A673 (cell line): ENCODE measurements at regions of chr2 and their contacts with region 1.

Region 1: DNA sequence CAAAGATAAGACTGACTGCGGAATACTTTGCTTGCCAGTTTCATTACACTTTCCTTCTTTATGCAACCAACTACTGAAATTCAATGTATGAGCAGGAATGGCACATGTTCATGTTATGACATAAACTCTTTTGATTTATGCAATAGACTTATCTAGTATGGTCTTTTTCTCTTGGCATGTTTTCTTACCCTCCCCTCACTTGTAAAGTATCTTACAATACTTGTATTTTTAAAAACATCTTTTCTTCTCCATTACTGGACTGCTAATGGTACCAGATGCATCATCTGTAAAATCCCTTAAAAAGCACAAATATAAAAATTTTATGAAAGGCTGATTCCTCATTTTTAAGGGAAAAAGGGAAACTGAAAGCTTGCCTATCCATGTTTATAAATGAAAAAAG is 373.8 kb downstream of the ZEB2 start:
- DNase-seq: no peak
- H3K4me3 ChIP-seq: no peak overlapping the region
- H3K27ac ChIP-seq: no peak overlapping the region
- H3K4me1 ChIP-seq: peaks cover 12% of the 10 kb centered on the region
- H3K27me3 ChIP-seq: no peaks in the 10 kb centered on the region
- CTCF ChIP-seq: no peak

Region 2: DNA sequence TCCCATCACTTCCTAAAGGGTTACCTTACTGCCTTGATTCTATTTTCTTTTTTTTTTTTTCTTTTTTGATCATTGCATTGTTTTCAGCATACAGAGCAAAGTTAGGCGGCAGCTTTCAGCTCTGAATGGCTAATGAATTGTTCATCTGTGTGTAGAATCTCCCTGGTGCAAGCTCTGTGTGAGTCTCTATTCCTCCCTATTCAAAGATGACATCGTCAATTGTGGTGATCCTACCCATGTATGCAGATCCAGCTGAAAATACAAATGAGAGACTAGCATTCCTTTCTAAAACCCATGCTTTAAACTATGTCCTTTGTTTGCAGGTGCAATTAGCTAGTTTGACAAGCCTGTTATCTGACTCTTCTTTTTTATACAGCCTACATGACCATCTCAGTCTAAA is 477.8 kb before region 1 on chr2:
- CTCF ChIA-PET with region 1: no interaction called
- POLR2A ChIA-PET with region 1: interaction called, 11 read pairs
- intact Hi-C with region 1: no loop called
- DNase-seq: no peak
- H3K4me3 ChIP-seq: no peak overlapping the region
- H3K27ac ChIP-seq: no peak overlapping the region
- H3K4me1 ChIP-seq: no peaks in the 10 kb centered on the region
- H3K27me3 ChIP-seq: no peaks in the 10 kb centered on the region
- CTCF ChIP-seq: no peak

Region 3: GRCh38 chr2:144124882-144125281 is 21.2 kb before region 1 on chr2:
- CTCF ChIA-PET with region 1: no interaction called
- POLR2A ChIA-PET with region 1: interaction called, 19 read pairs
- intact Hi-C with region 1: no loop called
- DNase-seq: no peak
- H3K4me3 ChIP-seq: no peak overlapping the region
- H3K27ac ChIP-seq: no peak overlapping the region
- H3K4me1 ChIP-seq: no peaks in the 10 kb centered on the region
- H3K27me3 ChIP-seq: no peaks in the 10 kb centered on the region
- CTCF ChIP-seq: no peak

Region 4: DNA sequence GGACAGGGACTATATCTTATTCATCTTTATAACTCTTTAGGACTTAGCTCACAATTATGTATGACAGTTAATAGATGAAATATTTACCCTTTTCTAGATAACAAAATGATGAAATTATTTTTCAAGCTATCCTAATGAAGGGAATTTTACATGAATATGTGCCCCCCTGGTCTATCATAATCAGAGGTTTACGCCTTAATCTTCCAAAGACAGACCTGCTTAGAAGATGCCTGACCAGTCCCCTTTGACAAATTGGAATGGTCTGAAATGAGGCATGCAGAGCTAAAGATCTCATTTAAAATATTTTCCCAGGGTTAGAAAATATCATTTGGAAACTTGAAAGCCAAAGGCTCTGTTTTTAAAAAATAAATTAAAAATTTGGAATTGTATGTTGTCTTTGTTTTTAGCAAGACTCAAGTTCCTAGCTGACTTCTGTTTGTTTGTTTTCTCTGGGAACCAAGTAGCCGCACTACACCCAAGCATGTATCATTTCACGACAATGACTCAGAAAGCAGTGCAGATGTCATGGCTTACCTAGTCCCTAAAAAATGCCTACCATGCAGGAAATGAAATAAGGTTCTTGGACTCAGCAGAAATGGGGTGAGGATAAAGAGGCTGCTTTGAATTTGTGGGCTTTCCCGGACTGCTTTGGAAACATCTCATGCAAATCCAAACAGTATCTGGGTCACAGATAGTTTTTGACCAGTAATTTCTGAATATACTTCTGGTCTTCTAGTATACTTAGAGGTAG is 211.7 kb after region 1 on chr2:
- CTCF ChIA-PET with region 1: no interaction called
- POLR2A ChIA-PET with region 1: no interaction called
- intact Hi-C with region 1: no loop called
- DNase-seq: no peak
- H3K4me3 ChIP-seq: no peak overlapping the region
- H3K27ac ChIP-seq: no peak overlapping the region
- H3K4me1 ChIP-seq: peaks cover 33% of the 10 kb centered on the region
- H3K27me3 ChIP-seq: no peaks in the 10 kb centered on the region
- CTCF ChIP-seq: no peak